K562 (cell line): ENCODE measurements at regions of chr22 and their contacts with region 1.

Region 1: DNA sequence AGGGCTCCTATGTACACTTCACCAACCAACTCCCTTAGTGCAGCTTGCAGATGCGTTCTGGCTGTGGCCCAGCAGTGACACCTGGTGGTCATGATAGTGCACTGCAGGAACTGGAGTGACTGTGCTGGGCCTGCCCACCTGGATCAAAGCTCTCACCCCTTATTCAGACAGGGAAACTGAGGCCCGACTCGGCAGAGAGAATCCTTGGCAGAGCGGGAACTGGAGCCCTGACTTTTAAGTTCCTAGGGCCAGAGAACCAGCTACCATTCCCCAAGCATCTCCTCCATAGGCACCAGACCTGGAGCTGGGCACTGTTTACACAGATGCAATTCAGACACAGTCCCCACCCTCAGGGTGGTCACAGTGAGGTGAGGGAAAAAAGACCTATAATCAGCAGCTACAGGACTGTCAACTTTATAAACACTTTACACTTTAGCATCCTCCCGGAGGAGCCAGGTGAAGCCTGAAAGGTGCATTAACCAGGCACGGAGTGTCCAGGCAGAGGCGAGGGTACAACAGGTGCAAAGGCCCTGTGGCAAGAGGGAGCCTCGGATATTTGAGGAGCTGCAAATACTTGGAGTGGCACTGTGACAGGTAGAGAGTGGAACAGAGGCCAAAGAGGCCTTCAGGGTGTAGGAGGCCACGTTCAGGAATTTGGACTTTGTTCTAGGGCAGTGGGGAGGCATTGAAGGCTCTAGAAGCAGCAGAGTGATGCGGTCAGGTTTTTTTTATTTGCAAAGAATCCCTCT is 22.0 kb downstream of the RHBDD3 start:
- DNase-seq: peak; percentile 63 to 72 (median 65)
- ATAC-seq: peak; percentile 97
- H3K4me3 ChIP-seq: no peak overlapping the region
- H3K27ac ChIP-seq: no peak overlapping the region
- H3K4me1 ChIP-seq: peaks cover 0 to 6% of the 10 kb centered on the region in 2 experiments; a peak in 2 of 5 replicates
- H3K27me3 ChIP-seq: no peaks in the 10 kb centered on the region
- CTCF ChIP-seq: peak; percentile 81 to 88 (median 84)
- EP300 ChIP-seq: no peak
- POLR2A ChIP-seq: no peak
- RAD21 ChIP-seq: peak; percentile 63 to 85

Region 2: GRCh38 chr22:28600546-28601143 is 645.2 kb before region 1 on chr22:
- CTCF ChIA-PET with region 1: interaction called, 7 read pairs
- POLR2A ChIA-PET with region 1: no interaction called
- in situ Hi-C with region 1: no loop called
- intact Hi-C with region 1: loop called (anchors 10 kb)
- DNase-seq: peak; percentile 5 to 48 (median 19)
- ATAC-seq: peak; percentile 57
- H3K4me3 ChIP-seq: no peak overlapping the region
- H3K27ac ChIP-seq: no peak overlapping the region
- H3K4me1 ChIP-seq: no peaks in the 10 kb centered on the region
- H3K27me3 ChIP-seq: no peaks in the 10 kb centered on the region
- CTCF ChIP-seq: peak; percentile 20 to 62 (median 36); a peak in 4 of 6 replicates
- EP300 ChIP-seq: no peak
- POLR2A ChIP-seq: no peak
- RAD21 ChIP-seq: peak; percentile 74 to 84

Region 3: DNA sequence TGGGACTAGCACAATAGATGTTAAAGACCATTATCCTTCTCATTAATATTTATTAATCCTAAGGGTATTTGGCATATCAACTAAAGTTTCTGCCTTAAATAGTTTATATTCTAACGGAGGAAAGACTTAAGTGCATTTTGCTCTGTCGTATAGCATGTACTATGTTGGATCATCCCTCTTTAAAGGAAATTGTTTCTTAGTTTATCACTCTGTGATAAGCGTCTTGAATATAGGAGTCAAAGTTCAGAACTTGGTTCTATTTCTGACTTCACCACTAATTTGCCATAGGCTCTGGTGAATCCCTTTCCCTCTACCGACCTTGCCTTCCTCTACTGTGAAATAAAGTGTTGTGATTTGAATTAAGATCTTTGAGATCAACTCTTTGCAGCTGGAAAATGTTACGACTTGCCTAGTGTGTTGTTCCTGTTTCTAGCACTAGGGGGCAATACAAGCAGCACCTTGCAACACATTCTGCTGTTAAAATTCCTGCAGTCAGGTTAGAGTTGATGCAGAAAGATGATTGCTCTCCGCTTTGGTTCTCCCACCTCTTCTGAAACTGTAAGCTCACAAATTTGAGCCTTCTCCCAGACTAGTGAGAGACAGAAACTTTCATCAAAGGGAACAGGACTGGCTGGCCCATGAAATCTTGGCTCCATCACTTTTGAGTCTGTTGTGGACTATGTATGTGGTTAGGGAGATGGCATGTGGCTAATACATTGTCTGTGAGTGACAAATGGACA is 390.3 kb before region 1 on chr22:
- CTCF ChIA-PET with region 1: interaction called, 10 read pairs
- POLR2A ChIA-PET with region 1: no interaction called
- in situ Hi-C with region 1: loop called (anchors 10 kb)
- intact Hi-C with region 1: loop called (anchors 2 kb)
- DNase-seq: peak; percentile 51 to 70 (median 63)
- ATAC-seq: peak; percentile 69
- H3K4me3 ChIP-seq: no peak overlapping the region
- H3K27ac ChIP-seq: no peak overlapping the region
- H3K4me1 ChIP-seq: no peaks in the 10 kb centered on the region
- H3K27me3 ChIP-seq: 0 out of 5 replicates have a peak, but pooled peaks cover 0 to 2% of the 10 kb centered on the region in 2 experiments
- CTCF ChIP-seq: peak; percentile 70 to 83 (median 75)
- EP300 ChIP-seq: no peak
- POLR2A ChIP-seq: no peak
- RAD21 ChIP-seq: peak; percentile 68 to 90

Region 4: DNA sequence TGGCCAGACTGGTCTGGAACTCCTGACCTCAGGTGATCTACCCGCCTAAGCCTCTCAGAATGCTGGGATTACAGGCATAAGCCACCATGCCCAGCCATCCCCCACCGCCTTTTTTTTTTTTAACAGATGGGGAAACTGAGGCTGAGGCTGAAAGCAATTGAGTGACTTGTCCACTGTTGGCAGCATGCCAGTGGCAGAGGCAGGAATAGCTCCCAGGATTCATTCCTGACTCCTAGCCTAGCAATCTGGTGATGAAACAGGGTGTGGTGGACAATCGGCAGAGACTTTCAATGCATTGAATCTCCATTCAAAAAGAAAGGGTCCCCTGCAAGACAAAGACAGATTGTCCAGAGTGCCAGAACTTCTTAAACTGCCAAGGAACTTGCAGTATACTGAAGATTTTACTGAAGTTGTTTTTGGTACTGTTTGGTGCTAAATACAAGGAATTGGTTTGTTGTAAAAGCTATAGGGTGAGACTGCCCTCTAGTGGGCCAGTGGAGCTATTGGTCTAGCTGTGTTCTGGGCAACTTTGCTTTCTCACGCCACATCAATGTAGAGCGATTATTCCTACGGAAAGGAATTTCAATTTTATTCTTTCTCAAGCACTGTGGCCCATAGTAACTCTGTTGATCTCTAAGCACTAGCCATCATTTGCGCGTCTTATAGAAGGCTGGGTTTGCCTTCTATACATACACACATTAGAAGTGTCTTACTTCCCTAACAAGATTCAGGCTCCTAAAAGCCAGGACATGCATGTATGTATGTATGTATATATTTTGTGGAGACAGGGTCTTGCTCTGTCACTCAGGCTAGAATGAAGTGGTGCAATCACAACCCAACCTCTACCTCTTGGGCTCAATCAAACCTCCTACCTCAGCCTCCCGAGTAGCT is 205.2 kb before region 1 on chr22:
- CTCF ChIA-PET with region 1: no interaction called
- POLR2A ChIA-PET with region 1: no interaction called
- in situ Hi-C with region 1: no loop called
- intact Hi-C with region 1: loop called (anchors 5 kb)
- DNase-seq: peak; percentile 45 to 77 (median 50)
- ATAC-seq: peak; percentile 88
- H3K4me3 ChIP-seq: no peak overlapping the region
- H3K27ac ChIP-seq: no peak overlapping the region
- H3K4me1 ChIP-seq: no peaks in the 10 kb centered on the region; a peak in 1 of 5 replicates
- H3K27me3 ChIP-seq: no peaks in the 10 kb centered on the region
- CTCF ChIP-seq: peak; percentile 74 to 82 (median 81)
- EP300 ChIP-seq: no peak
- POLR2A ChIP-seq: no peak
- RAD21 ChIP-seq: peak; percentile 76 to 88

Region 5: DNA sequence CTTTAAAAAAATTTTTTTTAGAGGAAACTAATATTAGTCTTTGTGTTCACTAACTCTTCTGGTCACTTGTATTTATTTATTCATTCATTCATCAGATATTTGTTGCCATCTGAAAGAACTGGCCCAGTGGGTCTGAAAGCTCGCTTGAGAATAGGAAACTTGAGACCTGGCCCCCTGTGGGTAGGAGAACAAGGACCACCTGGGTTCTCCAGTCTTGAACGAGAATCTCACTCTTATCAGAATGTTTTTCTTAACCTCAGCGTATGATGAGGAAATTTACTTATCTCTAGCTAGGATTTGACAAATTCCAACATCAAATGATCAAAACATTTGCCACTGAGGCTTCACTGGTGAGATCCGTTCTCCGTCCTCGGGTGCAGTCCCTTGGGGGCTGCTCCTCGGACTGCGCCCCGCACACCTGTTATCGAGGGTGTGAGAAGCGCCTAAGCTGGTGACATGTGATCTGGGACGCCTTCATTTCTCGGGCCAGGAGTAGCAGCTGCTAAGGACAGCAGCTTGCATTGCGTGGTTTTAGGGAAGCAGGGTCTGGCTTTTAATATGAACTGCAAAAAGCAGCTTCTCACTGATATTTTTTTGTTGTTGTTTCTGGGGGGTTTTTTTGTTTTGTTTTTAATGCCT is 190.5 kb before region 1 on chr22:
- CTCF ChIA-PET with region 1: no interaction called
- POLR2A ChIA-PET with region 1: no interaction called
- in situ Hi-C with region 1: loop called (anchors 5 kb)
- intact Hi-C with region 1: no loop called
- DNase-seq: no peak
- ATAC-seq: no peak
- H3K4me3 ChIP-seq: no peak overlapping the region
- H3K27ac ChIP-seq: no peak overlapping the region
- H3K4me1 ChIP-seq: peaks cover 7 to 9% of the 10 kb centered on the region in 2 experiments; a peak in 4 of 5 replicates
- H3K27me3 ChIP-seq: no peaks in the 10 kb centered on the region
- CTCF ChIP-seq: no peak
- EP300 ChIP-seq: no peak
- POLR2A ChIP-seq: no peak
- RAD21 ChIP-seq: no peak

Region 6: DNA sequence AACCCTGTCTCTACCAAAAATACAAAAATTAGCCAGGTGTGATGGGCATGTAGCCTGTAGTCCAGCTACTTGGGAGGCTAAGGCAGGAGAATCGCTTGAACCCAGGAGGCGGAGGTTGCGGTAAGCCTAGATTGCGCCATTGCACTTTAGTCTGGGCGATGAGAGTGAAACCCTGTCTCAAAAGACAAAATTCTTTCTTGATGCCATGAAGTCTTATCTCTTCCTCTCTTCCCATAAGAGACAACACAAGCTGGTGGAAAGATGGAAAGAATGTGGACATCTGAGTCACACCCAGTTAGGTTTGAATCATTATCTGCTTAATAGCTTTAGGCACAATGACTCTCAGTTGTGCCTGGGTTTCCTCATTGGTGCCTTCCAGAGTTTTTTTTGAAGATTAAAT is 137.7 kb before region 1 on chr22:
- CTCF ChIA-PET with region 1: no interaction called
- POLR2A ChIA-PET with region 1: no interaction called
- in situ Hi-C with region 1: no loop called
- intact Hi-C with region 1: no loop called
- DNase-seq: no peak
- ATAC-seq: no peak
- H3K4me3 ChIP-seq: no peak overlapping the region
- H3K27ac ChIP-seq: no peak overlapping the region
- H3K4me1 ChIP-seq: peaks cover 0 to 30% of the 10 kb centered on the region in 2 experiments; a peak in 3 of 5 replicates
- H3K27me3 ChIP-seq: no peaks in the 10 kb centered on the region
- CTCF ChIP-seq: no peak
- EP300 ChIP-seq: no peak
- POLR2A ChIP-seq: no peak
- RAD21 ChIP-seq: no peak

Region 7: DNA sequence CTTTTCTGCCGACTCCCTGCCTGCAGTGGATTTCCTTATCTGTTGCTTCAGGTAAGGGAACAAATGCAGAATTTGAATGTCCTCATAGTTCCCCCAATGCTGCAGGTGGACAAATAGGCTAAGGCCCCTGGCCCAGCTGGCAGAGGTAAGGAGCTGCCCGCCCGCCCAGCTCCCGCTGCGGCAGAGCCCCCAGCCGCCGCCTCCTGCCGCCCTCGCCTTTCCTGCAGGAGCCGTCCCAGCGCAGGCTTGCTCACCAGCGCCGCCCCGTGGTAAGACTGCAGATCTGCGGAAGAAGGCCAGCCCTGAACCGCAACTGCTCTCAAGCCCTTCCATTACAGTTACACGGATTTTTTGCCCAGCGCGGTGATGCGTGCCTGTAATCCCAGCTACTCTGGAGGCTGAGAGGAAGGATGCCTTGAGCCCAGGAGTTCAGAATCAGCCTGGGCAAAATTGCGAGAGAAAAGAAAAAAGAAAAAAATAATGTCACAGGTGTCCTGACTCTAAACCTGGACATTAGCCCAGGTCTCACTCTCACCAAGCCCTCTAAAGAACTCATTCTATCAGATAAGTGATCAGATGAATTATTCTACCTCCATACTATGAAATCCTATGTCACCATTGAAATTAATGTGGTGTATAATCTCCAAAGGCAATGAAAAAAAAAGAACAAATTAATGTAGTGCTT is 91.3 kb before region 1 on chr22:
- CTCF ChIA-PET with region 1: no interaction called
- POLR2A ChIA-PET with region 1: interaction called, 4 read pairs
- in situ Hi-C with region 1: no loop called
- intact Hi-C with region 1: loop called (anchors 2 kb)
- DNase-seq: peak; percentile 69 to 84 (median 76)
- ATAC-seq: peak; percentile 76
- H3K4me3 ChIP-seq: no peak overlapping the region
- H3K27ac ChIP-seq: peak overlapping the region; percentile 94
- H3K4me1 ChIP-seq: peaks cover 14 to 24% of the 10 kb centered on the region in 2 experiments
- H3K27me3 ChIP-seq: no peaks in the 10 kb centered on the region
- CTCF ChIP-seq: peak; percentile 87 to 93 (median 88)
- EP300 ChIP-seq: no peak
- POLR2A ChIP-seq: no peak
- RAD21 ChIP-seq: peak; percentile 71 to 81

Region 8: DNA sequence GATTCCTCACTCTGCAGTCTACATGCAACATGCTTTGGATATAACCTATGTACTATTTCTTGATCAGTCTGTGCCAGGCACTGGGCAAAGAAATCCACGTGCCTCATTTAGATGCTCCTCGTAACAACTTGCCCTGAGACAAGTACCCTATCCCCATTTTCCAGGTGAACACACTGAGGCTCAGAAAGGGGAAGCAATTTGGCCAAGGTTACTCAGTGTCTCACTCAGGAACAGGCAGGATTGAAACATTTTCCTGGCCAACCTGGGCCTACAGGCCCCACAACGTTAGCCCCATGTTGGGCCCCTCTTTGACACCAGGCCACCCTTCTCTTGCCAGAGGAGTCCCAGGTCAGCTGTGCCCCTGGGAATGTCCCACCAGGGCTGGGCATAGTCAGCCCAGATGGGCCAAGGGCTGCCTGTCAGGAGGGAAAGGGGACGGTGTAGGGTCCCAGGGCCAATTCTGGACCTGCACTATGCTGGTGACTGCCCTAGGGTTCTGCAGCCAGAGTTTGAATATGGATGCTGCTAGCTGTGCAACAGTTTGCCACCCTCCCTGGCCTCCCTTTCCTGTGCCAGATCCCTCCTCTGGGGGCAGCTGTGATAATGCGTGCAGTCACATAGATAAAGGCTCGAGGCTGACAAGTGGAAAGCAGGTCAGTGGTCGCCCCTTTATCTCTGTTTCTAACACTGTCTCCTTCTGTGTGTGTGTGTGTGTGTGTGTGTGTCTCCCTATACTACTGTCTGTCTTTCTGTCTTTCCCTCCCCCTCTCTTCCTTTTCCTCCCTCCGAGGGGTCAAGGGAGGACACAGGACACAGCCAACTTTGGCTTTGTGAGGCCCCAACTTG is 50.5 kb before region 1 on chr22:
- CTCF ChIA-PET with region 1: no interaction called
- POLR2A ChIA-PET with region 1: no interaction called
- in situ Hi-C with region 1: no loop called
- intact Hi-C with region 1: no loop called
- DNase-seq: peak; percentile 41 to 85 (median 60)
- ATAC-seq: peak; percentile 80
- H3K4me3 ChIP-seq: no peak overlapping the region
- H3K27ac ChIP-seq: peak overlapping the region; percentile 79
- H3K4me1 ChIP-seq: peaks cover 22 to 23% of the 10 kb centered on the region in 2 experiments
- H3K27me3 ChIP-seq: no peaks in the 10 kb centered on the region
- CTCF ChIP-seq: peak in 2 of 3 experiments; percentile 5 to 26; a peak in 2 of 6 replicates
- EP300 ChIP-seq: peak; percentile 87
- POLR2A ChIP-seq: no peak
- RAD21 ChIP-seq: peak in 1 of 2 experiments; percentile 25; a peak in 1 of 4 replicates

Region 9: DNA sequence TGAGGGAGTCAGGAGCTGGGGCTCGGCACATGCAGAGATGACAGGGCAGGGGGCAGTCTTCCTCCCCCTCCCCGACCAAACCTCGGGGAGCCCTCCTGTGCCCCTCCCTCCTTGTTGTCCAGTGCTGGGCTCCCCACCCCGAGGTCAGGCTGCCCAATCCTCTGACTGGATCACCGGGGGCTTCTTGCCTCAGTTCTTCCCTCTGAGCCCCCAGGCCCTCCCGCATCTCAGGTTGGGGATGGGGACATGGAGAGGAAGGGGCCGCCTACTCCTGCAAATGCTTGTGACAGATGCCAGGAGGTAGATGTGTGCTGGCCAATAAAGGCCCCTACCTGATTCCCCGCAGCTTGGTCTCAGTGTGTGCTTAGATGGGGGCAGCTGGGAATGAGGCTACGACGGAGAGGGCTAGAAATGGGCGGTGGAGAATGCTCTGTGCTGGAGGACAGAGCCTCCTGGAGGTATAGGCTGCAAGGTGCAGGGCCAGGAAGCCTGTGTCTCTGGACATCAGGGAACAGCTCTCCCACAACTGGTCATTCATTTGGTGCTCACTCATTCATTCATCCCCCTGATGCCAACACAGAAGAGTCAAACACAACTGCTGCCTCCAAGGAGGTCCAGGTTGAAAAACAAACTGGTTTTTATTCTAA is 13.6 kb after region 1 on chr22:
- CTCF ChIA-PET with region 1: no interaction called
- POLR2A ChIA-PET with region 1: interaction called, 6 read pairs
- in situ Hi-C with region 1: no loop called
- intact Hi-C with region 1: loop called (anchors 2 kb)
- DNase-seq: peak in 1 of 4 experiments; percentile 20
- ATAC-seq: peak; percentile 79
- H3K4me3 ChIP-seq: no peak overlapping the region
- H3K27ac ChIP-seq: no peak overlapping the region
- H3K4me1 ChIP-seq: peaks cover 0 to 30% of the 10 kb centered on the region in 2 experiments; a peak in 2 of 5 replicates
- H3K27me3 ChIP-seq: no peaks in the 10 kb centered on the region
- CTCF ChIP-seq: peak in 2 of 3 experiments; percentile 19 to 38; a peak in 4 of 6 replicates
- EP300 ChIP-seq: no peak
- POLR2A ChIP-seq: no peak
- RAD21 ChIP-seq: no peak